Panc1 (cell line): ENCODE measurements at regions of chr19 and their contacts with region 1.

Region 1: DNA sequence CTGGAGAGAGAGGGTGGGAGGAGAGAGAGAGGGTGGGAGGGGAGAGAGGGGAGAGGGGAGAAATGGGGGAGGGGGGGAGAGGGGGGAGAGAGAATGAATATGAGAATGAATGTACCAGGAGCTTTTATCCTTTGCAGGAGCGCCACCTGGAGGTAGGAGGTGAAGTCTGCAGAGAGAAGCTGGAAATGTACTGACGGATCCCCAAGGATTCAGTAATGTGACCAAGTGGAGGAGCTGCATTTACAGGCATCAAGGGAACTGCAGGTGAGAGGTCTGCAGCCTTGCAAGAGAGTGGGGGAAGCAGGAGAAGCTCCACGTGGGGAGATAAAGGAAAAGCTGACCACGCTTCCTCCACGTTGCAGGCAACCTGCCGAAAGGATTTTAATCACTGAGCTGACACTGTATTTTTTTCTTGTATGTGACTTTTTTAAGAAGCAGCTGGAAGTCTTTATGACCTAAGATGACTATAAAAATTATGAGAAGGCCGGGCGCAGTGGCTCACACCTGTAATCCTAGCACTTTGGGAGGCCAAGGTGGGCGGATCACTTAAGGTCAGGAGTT is 33.7 kb downstream of the VSTM1 start:
- DNase-seq: no peak
- ATAC-seq: peak; percentile 86
- H3K4me3 ChIP-seq: no peak overlapping the region
- H3K27ac ChIP-seq: peak overlapping the region; percentile 95
- H3K4me1 ChIP-seq: peaks cover 22% of the 10 kb centered on the region
- H3K27me3 ChIP-seq: no peaks in the 10 kb centered on the region
- CTCF ChIP-seq: peak; percentile 88

Region 2: DNA sequence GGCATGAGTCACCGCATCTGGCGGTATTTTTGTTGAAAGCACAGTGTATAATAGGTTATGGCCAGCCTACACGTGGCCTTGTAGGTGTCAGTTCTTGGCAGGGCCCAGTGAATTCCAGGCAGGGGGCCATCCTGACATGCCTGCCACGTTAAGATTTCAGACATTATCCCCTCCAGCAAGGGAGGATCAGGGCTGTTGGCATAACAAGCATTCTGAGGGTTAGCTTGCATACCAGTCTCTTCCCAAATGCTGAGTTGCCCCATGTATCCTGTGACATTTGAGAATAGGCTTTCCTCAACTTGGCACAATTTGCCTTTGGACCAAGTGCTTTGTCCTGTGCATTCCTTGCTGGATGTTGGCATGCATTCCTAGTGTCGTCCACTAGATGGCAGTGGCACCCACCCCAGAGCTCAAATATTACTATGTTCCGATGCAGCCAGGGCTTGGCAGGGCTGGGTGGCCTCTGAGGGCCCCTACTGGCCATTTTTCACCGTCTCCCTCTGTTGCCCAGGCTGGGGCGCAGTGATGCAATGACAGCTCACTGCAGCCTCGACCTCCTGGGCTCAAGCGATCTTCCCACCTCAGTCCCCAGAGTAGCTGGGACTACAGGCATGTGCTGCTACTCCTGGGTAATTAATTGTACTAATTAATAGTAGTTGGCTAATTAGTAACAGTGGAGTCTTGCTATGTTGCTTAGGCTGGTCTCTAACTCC is 237.1 kb before region 1 on chr19:
- CTCF ChIA-PET with region 1: interaction called, 11 read pairs
- POLR2A ChIA-PET with region 1: no interaction called
- in situ Hi-C with region 1: no loop called
- intact Hi-C with region 1: no loop called
- DNase-seq: peak; percentile 89
- ATAC-seq: peak; percentile 100
- H3K4me3 ChIP-seq: peak overlapping the region in 1 of 2 experiments; percentile 26; a peak in 2 of 4 replicates
- H3K27ac ChIP-seq: no peak overlapping the region
- H3K4me1 ChIP-seq: no peaks in the 10 kb centered on the region
- H3K27me3 ChIP-seq: no peaks in the 10 kb centered on the region
- CTCF ChIP-seq: peak; percentile 100

Region 3: DNA sequence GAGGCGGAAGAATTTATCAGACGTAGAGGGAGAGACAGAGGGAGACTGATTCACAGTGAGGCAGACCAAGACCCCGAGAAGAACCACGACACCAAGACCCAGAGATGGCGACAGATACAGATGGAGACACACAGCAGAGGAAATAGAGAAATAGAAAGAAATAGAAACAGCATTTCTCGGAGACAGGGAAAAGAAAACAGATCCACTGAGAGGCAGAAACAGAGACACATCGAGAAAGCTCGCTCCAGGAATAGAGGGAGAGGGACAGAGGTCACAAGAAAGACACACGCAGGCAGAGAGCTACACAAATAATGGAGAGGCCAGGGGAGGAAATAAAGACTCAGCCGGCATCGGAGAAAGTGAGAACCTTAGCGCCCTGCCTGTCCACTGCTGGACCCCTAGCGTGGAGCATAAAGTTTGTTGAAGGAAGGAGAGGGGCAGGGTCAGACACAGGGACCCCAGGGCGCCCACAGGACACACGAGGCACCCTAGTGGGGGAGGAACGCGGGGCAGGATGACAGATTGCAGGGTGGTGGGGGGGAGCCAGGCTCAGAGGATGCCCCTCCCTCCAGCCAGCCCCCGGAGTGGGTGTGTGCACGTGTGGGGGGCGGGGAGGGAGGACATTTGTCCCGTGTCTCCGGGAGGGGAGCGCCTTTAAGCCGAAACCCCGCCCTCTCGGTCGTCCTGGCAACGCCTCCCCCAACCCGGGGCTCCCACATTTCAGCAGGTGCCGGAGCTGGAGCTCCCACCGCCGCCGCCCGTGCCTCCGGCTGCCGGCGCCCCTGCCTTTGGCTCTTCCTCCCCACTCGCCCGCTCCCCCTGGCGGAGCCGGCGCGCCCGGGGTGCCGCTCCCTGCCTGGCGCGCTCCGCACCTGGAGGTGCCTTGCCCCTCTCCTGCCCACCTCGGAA is 148.3 kb before region 1 on chr19 and contains the start of gene PRKCG:
- CTCF ChIA-PET with region 1: interaction called, 11 read pairs
- POLR2A ChIA-PET with region 1: interaction called, 3 read pairs
- in situ Hi-C with region 1: no loop called
- intact Hi-C with region 1: no loop called
- DNase-seq: no peak
- ATAC-seq: peak; percentile 46
- H3K4me3 ChIP-seq: peak within 1 kb of the TSS; percentile 51 to 73
- H3K27ac ChIP-seq: peak within 1 kb of the TSS; percentile 78
- H3K4me1 ChIP-seq: peaks cover 31% of the 10 kb centered on the region
- H3K27me3 ChIP-seq: no peaks in the 10 kb centered on the region
- CTCF ChIP-seq: peak; percentile 84; the same call in 1 of the 2 replicates
- total RNA-seq, gene PRKCG: 2.5 TPM

Region 4: DNA sequence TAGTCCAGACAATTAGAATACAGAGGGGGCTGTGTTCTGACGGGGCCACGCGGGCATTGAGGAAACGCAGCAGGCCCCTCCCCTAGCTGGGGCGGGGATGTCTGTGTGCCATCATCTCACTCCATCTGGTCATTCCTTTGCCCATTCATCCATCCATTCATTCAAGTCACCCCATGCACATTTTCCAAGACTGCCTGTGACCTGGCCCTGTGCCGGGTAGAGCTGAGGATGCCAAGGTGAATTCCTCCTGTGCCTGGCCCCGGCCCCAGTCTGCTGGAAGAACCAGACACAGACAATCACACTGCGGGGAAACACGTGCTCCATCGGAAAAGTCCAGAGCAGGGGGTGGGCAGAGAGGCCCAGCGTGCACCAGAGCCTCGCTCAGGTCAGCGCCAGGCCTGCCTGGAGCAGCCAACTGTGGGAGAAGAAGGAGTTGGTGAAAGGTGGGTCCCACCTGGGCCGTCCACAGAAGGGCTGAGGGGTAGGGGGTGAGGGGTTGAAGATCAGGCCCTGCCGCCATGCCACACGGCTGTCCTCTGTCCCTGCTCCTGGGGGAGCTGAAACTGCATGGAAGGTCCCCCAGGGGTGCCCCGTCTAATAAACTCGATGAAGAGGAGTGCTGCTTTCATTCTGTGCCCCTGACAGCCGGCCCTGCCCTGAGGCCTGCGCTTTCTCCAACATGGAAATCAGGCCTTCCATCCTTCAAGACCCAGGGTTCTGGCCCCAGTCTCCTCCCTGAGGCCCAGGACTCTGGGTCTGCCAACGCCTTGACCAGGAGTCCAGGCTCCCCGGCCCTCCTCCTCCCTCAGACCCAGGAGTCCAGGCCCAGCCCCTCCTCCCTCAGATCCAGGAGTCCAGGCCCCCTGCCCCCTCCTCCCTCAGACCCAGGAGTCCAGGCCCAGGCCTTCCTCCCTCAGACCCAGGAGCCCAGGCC is 40.1 kb before region 1 on chr19:
- CTCF ChIA-PET with region 1: interaction called, 3 read pairs
- POLR2A ChIA-PET with region 1: interaction called, 12 read pairs
- in situ Hi-C with region 1: no loop called
- intact Hi-C with region 1: no loop called
- DNase-seq: peak; percentile 87
- ATAC-seq: peak; percentile 71
- H3K4me3 ChIP-seq: peak overlapping the region in 1 of 2 experiments; percentile 7; a peak in 1 of 4 replicates
- H3K27ac ChIP-seq: peak overlapping the region; percentile 94
- H3K4me1 ChIP-seq: peaks cover 62% of the 10 kb centered on the region
- H3K27me3 ChIP-seq: no peaks in the 10 kb centered on the region
- CTCF ChIP-seq: no peak

Region 5: DNA sequence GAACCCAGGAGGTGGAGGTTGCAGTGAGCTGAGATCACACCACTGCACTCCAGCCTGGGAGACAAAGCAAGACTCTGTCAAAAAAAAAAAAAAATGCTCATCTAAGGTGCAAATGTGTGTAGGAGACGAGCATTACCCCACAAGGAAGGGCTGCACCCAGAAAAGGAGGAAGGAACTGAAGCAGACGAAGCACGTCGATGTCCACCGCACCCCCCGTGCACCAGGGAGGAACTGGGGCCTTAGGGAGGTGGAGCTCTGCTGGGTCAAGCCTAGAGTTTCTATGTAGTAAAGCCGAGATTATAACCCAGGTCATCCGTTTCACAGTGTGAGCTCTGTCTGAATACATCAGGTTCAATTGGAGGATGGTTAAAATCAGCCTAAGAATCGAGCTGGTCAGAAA is 32.6 kb after region 1 on chr19:
- CTCF ChIA-PET with region 1: interaction called, 5 read pairs
- POLR2A ChIA-PET with region 1: interaction called, 14 read pairs
- in situ Hi-C with region 1: no loop called
- intact Hi-C with region 1: no loop called
- DNase-seq: no peak
- ATAC-seq: 0 out of 2 replicates have a peak, but pooled peaks have one; percentile 17
- H3K4me3 ChIP-seq: no peak overlapping the region
- H3K27ac ChIP-seq: no peak overlapping the region
- H3K4me1 ChIP-seq: no peaks in the 10 kb centered on the region
- H3K27me3 ChIP-seq: no peaks in the 10 kb centered on the region
- CTCF ChIP-seq: no peak

Region 6: DNA sequence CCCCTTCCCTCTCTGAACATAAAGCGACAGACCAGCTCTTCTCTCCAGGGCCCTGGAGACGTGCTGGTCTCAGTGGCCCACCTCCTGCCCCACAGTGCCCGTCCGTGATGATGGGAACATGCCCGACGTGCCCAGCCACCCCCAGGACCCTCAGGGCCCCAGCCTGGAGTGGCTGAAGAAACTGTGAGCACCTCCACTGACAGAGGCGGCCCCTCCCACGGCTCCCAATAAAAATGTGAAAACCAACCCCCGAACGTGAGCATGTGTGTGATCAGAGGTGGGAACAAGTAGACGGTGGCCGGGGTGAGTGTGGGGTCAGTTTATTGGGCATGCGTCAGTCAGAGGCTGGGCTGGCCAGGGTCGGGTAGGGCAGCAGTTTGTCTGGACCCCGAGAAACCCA is 76.7 kb after region 1 on chr19:
- CTCF ChIA-PET with region 1: no interaction called
- POLR2A ChIA-PET with region 1: no interaction called
- in situ Hi-C with region 1: no loop called
- intact Hi-C with region 1: no loop called
- DNase-seq: no peak
- ATAC-seq: no peak
- H3K4me3 ChIP-seq: no peak overlapping the region
- H3K27ac ChIP-seq: no peak overlapping the region
- H3K4me1 ChIP-seq: 0 out of 2 replicates have a peak, but pooled peaks cover 13% of the 10 kb centered on the region
- H3K27me3 ChIP-seq: no peaks in the 10 kb centered on the region
- CTCF ChIP-seq: no peak